Heart left ventricle (tissue), 16 donors: ENCODE measurements at regions of chr7 and their contacts with region 1.

Region 1: GRCh38 chr7:10266976-10267375 is 706.7 kb upstream of the PHF14 start:
- DNase-seq: no peak
- ATAC-seq: no peak
- H3K4me3 ChIP-seq: no peak overlapping the region
- H3K27ac ChIP-seq: no peak overlapping the region
- H3K4me1 ChIP-seq: peaks cover 0 to 7% (median 0%) of the 10 kb centered on the region in 12 donors
- H3K27me3 ChIP-seq: no peaks in the 10 kb centered on the region
- CTCF ChIP-seq: no peak
- POLR2A ChIP-seq: no peak

Region 2: GRCh38 chr7:10239695-10240345 is 27.2 kb before region 1 on chr7:
- intact Hi-C with region 1: loop called in 1 of 10 experiments (anchors 1 kb)
- DNase-seq: peak in 3 of 5 donors; percentile 15 to 29 (median 29)
- ATAC-seq: peak; percentile 90 to 96 (median 91)
- H3K4me3 ChIP-seq: peak overlapping the region in 11 of 12 donors; percentile 6 to 56 (median 46)
- H3K27ac ChIP-seq: peak overlapping the region; percentile 60 to 89 (median 76)
- H3K4me1 ChIP-seq: peaks cover 0 to 16% (median 8%) of the 10 kb centered on the region in 12 donors
- H3K27me3 ChIP-seq: no peaks in the 10 kb centered on the region
- CTCF ChIP-seq: no peak
- POLR2A ChIP-seq: peak in 1 of 2 donors; percentile 51